H1 (cell line): ENCODE measurements at regions of chr11 and their contacts with region 1.

Region 1: DNA sequence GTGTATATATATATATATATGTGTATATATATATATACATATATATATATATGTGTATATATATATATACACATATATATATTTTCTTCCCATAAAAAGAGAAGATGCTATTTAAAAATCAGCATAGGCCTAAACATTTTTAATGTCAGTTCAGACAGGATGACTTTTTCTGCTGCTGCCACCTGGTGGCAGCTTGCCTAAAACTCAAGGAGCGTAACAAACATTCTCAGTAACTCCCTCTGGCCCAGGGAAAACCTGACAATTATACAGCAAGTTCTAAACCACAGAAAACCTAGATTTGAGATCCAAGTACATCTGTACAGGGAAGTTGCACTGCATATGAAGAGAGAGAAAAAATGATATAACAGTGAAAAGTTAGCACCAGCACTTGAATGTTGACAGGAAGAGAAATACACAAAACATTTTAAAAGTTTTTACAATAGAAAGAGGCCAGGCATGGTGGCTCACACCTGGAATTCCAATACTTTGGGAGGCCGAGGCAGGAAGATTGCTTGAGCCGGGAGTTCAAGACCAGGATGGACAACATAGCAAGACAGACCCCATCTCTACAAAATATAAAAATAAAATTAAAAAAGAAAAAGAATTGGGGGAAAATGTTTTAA is 16.6 kb downstream of the OR8A1 start:
- DNase-seq: peak; percentile 39 to 66
- H3K4me3 ChIP-seq: no peak overlapping the region
- H3K27ac ChIP-seq: no peak overlapping the region
- H3K4me1 ChIP-seq: peaks cover 0 to 3% (median 0%) of the 10 kb centered on the region in 4 experiments; a peak in 1 of 7 replicates
- H3K27me3 ChIP-seq: no peaks in the 10 kb centered on the region
- CTCF ChIP-seq: peak; percentile 19 to 69 (median 66)
- EP300 ChIP-seq: no peak
- POLR2A ChIP-seq: no peak
- RAD21 ChIP-seq: peak; percentile 57 to 72

Region 2: DNA sequence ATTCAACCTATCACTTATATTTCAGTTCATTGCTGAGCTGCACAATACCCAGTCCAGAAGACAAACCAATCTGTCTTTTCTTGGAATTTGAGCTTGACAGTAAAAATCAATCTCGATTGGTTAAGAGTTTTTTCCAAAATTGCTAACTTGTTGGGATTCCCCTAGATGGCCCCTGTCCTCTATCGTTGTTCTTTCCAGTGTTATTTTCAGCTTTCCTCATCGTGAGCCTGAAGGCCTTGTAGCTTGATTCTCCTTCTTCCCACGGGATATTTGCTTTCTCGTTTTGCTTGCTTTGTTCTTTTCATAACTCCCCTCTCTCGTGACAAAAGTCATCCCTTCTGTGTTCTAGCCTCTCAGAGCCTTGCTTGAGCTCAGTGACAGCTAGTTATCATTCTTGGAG is 143.9 kb before region 1 on chr11:
- CTCF ChIA-PET with region 1: interaction called, 20 read pairs
- POLR2A ChIA-PET with region 1: no interaction called
- DNase-seq: no peak
- H3K4me3 ChIP-seq: no peak overlapping the region
- H3K27ac ChIP-seq: no peak overlapping the region
- H3K4me1 ChIP-seq: no peaks in the 10 kb centered on the region
- H3K27me3 ChIP-seq: no peaks in the 10 kb centered on the region
- CTCF ChIP-seq: no peak; a peak in 1 of 4 replicates
- EP300 ChIP-seq: no peak
- POLR2A ChIP-seq: no peak
- RAD21 ChIP-seq: peak; percentile 34 to 52

Region 3: DNA sequence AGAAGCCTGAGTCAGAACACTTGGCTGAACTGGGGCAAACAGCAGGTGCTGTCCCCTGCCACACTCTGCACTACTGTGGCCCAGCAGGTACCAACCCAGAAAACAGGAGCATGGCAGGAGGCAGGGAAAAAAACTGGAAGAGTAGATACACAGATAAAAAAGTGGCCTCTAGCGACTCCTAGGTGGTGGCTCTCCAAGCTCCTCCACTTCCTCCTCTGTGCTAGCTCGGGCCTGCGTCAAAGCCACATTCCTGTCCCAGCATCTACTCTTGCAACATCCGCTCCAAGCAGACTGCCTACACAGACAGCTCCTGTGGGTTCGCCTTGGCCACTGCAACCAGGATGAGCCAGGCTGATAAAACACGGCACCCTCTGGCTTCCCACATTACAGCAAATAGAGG is 49.8 kb before region 1 on chr11:
- CTCF ChIA-PET with region 1: interaction called, 11 read pairs
- POLR2A ChIA-PET with region 1: no interaction called
- DNase-seq: peak; percentile 47 to 59
- H3K4me3 ChIP-seq: no peak overlapping the region
- H3K27ac ChIP-seq: no peak overlapping the region
- H3K4me1 ChIP-seq: peaks cover 0 to 5% (median under 1%) of the 10 kb centered on the region in 4 experiments; a peak in 4 of 7 replicates
- H3K27me3 ChIP-seq: no peaks in the 10 kb centered on the region
- CTCF ChIP-seq: peak in 2 of 3 experiments; percentile 24 to 49; a peak in 3 of 4 replicates
- EP300 ChIP-seq: no peak
- POLR2A ChIP-seq: no peak
- RAD21 ChIP-seq: peak; percentile 44 to 59

Region 4: DNA sequence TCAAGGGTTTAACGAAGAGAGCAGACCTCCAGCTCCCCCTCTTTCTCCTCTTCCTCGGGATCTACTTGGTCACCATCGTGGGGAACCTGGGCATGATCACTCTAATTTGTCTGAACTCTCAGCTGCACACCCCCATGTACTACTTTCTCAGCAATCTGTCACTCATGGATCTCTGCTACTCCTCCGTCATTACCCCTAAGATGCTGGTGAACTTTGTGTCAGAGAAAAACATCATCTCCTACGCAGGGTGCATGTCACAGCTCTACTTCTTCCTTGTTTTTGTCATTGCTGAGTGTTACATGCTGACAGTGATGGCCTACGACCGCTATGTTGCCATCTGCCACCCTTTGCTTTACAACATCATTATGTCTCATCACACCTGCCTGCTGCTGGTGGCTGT is 16.2 kb before region 1 on chr11:
- CTCF ChIA-PET with region 1: interaction called, 10 read pairs
- POLR2A ChIA-PET with region 1: no interaction called
- DNase-seq: no peak
- H3K4me3 ChIP-seq: no peak overlapping the region
- H3K27ac ChIP-seq: no peak overlapping the region
- H3K4me1 ChIP-seq: peaks cover 0 to 3% (median 1%) of the 10 kb centered on the region in 4 experiments; a peak in 2 of 7 replicates
- H3K27me3 ChIP-seq: no peaks in the 10 kb centered on the region
- CTCF ChIP-seq: no peak
- EP300 ChIP-seq: no peak
- POLR2A ChIP-seq: no peak
- RAD21 ChIP-seq: no peak